Endothelial cell of umbilical vein (primary cell): ENCODE measurements at regions of chr1 and their contacts with region 1.

Region 1: GRCh38 chr1:183804881-183805841 is at the start of gene RGL1:
- DNase-seq: peak; percentile 89
- H3K4me3 ChIP-seq: peak within 1 kb of the TSS; percentile 51 to 96 (median 89)
- H3K27ac ChIP-seq: peak within 1 kb of the TSS; percentile 88
- H3K4me1 ChIP-seq: peaks cover 25% of the 10 kb centered on the region
- H3K27me3 ChIP-seq: no peaks in the 10 kb centered on the region
- CTCF ChIP-seq: no peak
- POLR2A ChIP-seq: peak; percentile 90
- total RNA-seq, gene RGL1: 35.3 and 38.4 TPM in 2 replicates

Region 2: GRCh38 chr1:183635606-183636333 is 169.4 kb before region 1 on chr1 and contains the start of gene ARPC5:
- CTCF ChIA-PET with region 1: no interaction called
- POLR2A ChIA-PET with region 1: no interaction called
- dilution Hi-C with region 1: no loop called
- intact Hi-C with region 1: loop called (anchors 5 kb)
- DNase-seq: peak; percentile 100
- H3K4me3 ChIP-seq: peak within 1 kb of the TSS; percentile 93 to 100 (median 99)
- H3K27ac ChIP-seq: peak within 1 kb of the TSS; percentile 67
- H3K4me1 ChIP-seq: peaks cover 28% of the 10 kb centered on the region
- H3K27me3 ChIP-seq: no peaks in the 10 kb centered on the region
- CTCF ChIP-seq: no peak
- POLR2A ChIP-seq: peak; percentile 95
- total RNA-seq, gene ARPC5: 185 and 190 TPM in 2 replicates

Region 3: GRCh38 chr1:183655562-183656075 is 149.5 kb before region 1 on chr1:
- CTCF ChIA-PET with region 1: interaction called, 5 read pairs
- POLR2A ChIA-PET with region 1: no interaction called
- dilution Hi-C with region 1: no loop called
- intact Hi-C with region 1: loop called (anchors 2 kb)
- DNase-seq: peak; percentile 81
- H3K4me3 ChIP-seq: no peak overlapping the region
- H3K27ac ChIP-seq: no peak overlapping the region
- H3K4me1 ChIP-seq: peaks cover 27% of the 10 kb centered on the region
- H3K27me3 ChIP-seq: no peaks in the 10 kb centered on the region
- CTCF ChIP-seq: peak; percentile 73 to 81
- POLR2A ChIP-seq: no peak

Region 4: GRCh38 chr1:183711741-183712361 is 93.3 kb before region 1 on chr1:
- CTCF ChIA-PET with region 1: no interaction called
- POLR2A ChIA-PET with region 1: no interaction called
- dilution Hi-C with region 1: no loop called
- intact Hi-C with region 1: loop called (anchors 1 kb)
- DNase-seq: peak; percentile 60
- H3K4me3 ChIP-seq: no peak overlapping the region
- H3K27ac ChIP-seq: peak overlapping the region; percentile 39
- H3K4me1 ChIP-seq: peaks cover 8% of the 10 kb centered on the region
- H3K27me3 ChIP-seq: no peaks in the 10 kb centered on the region
- CTCF ChIP-seq: peak in 1 of 2 donors; percentile 7
- POLR2A ChIP-seq: no peak

Region 5: GRCh38 chr1:183837062-183837461 is 31.9 kb after region 1 on chr1:
- CTCF ChIA-PET with region 1: interaction called, 3 read pairs
- POLR2A ChIA-PET with region 1: interaction called, 6 read pairs
- dilution Hi-C with region 1: no loop called
- intact Hi-C with region 1: loop called (anchors 1 kb)
- DNase-seq: no peak
- H3K4me3 ChIP-seq: no peak overlapping the region
- H3K27ac ChIP-seq: no peak overlapping the region
- H3K4me1 ChIP-seq: peaks cover 35% of the 10 kb centered on the region
- H3K27me3 ChIP-seq: no peaks in the 10 kb centered on the region
- CTCF ChIP-seq: no peak
- POLR2A ChIP-seq: no peak

Region 6: DNA sequence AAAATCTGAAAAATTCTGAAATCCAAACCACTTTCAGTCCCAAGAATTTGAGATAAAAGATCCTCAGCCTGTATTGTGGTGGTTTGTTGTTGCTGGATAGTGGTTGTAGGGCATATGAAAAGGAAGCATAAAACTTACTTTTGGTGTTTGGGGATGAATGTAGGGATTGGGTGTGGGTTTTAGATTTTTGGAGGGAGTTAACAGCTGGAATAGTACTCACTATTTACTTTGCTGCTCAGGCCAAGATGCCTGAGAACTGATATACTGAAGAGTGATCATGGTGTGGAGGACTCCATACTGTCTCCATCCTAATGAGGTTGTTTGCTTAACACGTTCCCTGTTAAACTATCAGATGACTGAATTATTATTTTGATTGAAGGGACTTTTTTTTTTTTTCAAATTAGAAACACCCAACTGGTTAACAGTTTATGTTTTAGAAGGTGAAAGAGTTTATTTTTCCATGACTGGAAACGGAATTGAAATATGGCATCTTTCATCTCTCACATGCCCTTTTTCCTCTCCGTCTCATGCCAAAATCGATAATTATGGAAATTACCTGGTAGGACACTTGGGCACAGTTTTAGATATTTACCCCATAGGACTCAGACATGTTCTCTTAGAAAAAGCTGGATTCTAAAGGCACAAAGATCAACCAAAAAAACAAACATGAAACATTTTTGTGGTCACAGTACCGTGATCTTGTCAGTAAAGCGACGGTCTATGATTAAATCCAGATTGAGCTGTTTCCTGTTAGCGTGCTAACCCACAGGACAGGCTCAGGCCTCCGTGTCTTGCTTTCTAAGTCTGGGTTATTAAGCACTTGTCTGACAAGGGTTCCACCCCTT is 37.0 kb after region 1 on chr1:
- CTCF ChIA-PET with region 1: interaction called, 3 read pairs
- POLR2A ChIA-PET with region 1: interaction called, 6 read pairs
- dilution Hi-C with region 1: no loop called
- intact Hi-C with region 1: loop called (anchors 1 kb)
- DNase-seq: peak; percentile 80
- H3K4me3 ChIP-seq: peak overlapping the region in 1 of 3 experiments; percentile 28
- H3K27ac ChIP-seq: peak overlapping the region; percentile 74
- H3K4me1 ChIP-seq: peaks cover 53% of the 10 kb centered on the region
- H3K27me3 ChIP-seq: no peaks in the 10 kb centered on the region
- CTCF ChIP-seq: no peak
- POLR2A ChIP-seq: no peak

Region 7: DNA sequence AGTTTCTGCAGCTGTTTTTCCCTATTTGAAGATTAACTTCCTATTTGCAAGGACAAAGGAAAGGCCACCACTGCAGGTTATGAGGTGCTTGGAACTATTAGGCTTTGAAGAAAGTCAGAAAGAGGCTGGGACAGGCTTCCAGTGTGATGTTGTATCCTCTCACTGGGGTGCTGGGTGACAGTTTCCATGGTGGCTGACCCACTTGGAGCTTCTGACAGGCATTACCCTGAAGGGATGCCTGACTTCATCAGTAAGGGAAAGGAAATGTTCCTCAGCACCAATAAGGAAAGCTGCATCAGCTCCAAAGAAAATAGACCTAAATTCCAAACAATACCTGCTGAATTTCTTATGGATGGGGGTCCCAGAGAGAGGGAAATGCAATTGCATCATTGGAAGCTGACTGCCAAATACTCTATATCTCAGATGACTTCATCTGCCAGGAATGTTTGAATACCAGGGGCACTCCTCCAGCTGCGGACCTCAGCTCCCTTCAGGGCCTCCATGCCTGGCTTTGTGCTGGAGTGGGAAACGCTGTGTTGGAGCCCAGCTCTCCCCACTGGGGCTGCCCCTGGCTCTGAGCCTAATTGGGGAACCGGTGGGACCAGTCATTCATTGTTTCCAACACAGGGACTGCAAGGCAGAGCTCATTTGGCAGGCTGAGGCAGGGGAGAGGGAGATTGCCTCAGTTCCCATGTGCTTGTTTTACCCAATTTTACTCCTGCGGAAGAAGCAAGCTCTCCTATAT is 76.4 kb after region 1 on chr1:
- CTCF ChIA-PET with region 1: interaction called, 3 read pairs
- POLR2A ChIA-PET with region 1: interaction called, 11 read pairs
- dilution Hi-C with region 1: no loop called
- intact Hi-C with region 1: loop called (anchors 2 kb)
- DNase-seq: peak; percentile 98
- H3K4me3 ChIP-seq: no peak overlapping the region
- H3K27ac ChIP-seq: peak overlapping the region; percentile 77
- H3K4me1 ChIP-seq: peaks cover 43% of the 10 kb centered on the region
- H3K27me3 ChIP-seq: no peaks in the 10 kb centered on the region
- CTCF ChIP-seq: no peak
- POLR2A ChIP-seq: peak; percentile 56